Sciatic nerve (tissue), 2 donors: ENCODE measurements at regions of chr18 and their contacts with region 1.

Region 1: DNA sequence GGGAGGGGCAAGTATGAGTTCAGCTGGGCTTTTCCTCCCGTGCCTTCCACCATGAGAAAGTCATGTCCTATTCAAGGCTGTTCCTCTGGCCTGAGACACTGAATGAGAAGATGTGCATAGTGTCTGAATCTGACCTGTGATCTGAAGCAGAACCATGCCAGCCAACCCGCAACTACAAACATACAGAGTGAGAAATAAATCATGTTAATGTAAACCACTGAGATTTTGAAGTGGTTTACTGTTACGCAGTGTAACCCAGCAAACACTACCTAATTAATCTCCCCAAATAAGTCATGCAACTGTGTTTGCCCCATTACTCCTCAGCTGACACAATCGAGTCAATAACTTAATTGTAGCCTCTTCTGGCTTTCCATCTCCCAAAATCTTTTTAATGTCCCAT is 49.2 kb downstream of the METTL4 start:
- DNase-seq: no peak
- ATAC-seq: no peak

Region 2: DNA sequence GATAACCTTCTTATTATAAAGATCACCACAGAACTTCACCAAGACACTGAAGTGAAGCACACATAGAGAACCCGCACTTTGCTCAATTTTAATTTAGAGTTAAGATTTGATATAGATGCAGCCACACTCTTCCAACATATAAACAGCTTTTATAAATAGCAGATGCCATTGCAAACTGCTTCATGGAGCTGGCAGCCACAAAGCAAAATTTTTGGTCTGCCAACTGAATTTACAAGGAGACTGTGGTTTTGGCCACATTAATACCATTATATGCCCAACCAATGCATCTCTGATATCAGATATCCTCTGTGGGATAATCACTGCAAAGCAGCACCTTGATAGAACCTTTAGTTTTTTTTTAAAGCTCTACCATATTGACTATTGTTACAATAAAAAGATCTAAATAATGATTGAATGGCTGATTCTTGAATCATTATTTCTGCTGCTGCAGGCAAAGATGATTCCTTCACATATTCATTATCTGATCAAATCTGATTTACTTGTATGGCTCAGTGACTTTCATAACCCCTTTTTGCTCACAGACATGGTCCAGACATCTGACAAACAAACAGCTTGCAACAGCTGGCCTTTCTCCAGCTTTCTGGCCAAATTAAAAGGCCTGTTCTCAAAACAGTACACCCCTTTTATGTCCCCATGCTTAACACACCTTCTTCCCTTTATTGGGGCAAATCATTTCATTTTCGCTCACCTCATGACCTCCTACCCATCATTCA is 39.2 kb before region 1 on chr18:
- intact Hi-C with region 1: no loop called
- DNase-seq: no peak
- ATAC-seq: no peak

Region 3: DNA sequence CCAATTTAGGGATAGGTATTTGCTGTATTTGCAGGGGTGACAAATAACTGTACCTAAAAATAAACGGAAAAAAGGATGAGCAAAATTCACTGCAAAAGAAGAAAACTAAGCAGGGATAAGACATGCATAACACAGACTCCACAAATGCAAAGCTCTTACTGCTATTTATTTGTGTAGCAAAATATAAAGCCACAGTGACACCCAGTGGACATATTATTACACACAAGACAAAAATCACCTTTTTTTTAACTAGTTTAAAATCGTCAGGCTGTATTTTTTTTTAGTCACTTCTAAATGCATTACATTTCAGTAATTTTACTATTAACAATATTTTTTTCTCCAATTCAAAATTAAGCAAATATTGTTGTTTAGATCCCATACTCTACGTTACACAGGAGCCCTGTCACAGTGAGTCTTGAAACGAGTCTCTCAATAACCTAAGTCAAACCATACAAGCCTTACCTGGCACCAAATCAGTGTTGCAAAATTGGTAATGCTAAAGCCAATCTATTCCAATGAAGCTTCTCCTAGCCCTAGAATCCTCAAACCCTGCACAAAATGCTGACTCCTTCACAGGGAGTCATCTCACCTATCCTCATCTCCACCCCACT is 25.5 kb after region 1 on chr18:
- intact Hi-C with region 1: loop called (anchors 1 kb)
- DNase-seq: no peak
- ATAC-seq: peak; percentile 76

Region 4: GRCh38 chr18:2618009-2618408 is 95.9 kb after region 1 on chr18:
- intact Hi-C with region 1: no loop called
- DNase-seq: no peak
- ATAC-seq: no peak